Activated T-helper 2 cell treated with anti-CD3 and anti-CD28 coated beads, Interferon-gamma antibody, Interleukin-2, Interleukin-4, amounts not matched to agents 10 μg/mL and 5 μg/mL and 100 μg/mL, durations not matched to agents 14 hours and 24 hours and 36 hours (primary cell): ENCODE measurements at regions of chr9 and their contacts with region 1.

Region 1: GRCh38 chr9:132406554-132407122 is at the start of gene TTF1:
- DNase-seq: peak; percentile 91
- H3K4me3 Mint-ChIP-seq: peak within 1 kb of the TSS; percentile 80
- H3K27ac Mint-ChIP-seq: peak within 1 kb of the TSS; percentile 93
- H3K4me1 Mint-ChIP-seq: peaks cover 38% of the 10 kb centered on the region
- H3K27me3 Mint-ChIP-seq: peaks cover 20% of the 10 kb centered on the region
- total RNA-seq, gene TTF1: 35.4 and 36.2 TPM in 2 replicates

Region 2: GRCh38 chr9:130663258-130663976 is 1743.2 kb before region 1 on chr9:
- intact Hi-C with region 1: loop called (anchors 5 kb)
- DNase-seq: no peak
- H3K4me3 Mint-ChIP-seq: no peak overlapping the region
- H3K27ac Mint-ChIP-seq: no peak overlapping the region
- H3K4me1 Mint-ChIP-seq: peaks cover 3% of the 10 kb centered on the region
- H3K27me3 Mint-ChIP-seq: peaks cover 58% of the 10 kb centered on the region

Region 3: DNA sequence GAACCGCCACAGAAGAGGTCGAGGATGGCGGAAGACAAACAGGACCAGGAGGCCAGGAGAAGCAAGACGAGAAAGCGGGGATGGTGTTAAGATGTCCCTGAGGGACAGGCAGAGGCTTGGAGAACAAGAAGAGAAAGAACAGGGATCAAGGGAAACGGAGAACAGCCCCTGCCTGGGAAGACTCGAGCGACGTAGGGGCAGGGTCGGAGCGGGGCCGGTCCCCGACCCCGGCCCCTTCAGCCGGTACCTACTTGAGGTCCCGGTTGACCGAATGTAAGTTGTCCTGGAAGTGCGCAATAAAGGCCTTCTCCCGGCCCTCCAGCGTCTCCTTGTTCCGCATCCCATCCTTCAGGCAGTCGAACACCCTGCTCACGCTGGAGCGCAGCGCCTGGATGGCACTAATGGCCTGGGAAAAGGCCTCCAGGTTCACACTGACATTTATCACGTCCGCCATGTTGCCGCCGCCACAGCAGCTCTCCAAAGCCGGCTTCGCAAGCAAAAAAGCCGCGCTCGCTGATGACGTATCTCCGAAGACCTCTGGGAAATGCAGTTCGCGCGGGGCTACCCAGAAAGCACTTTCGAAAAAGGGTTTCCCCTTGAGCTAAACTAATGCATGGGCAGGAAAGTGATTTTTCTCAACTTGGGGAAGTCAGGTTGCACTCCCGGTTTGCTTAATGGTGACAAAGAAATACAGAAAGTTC is 327.1 kb before region 1 on chr9 and contains the start of gene MED27:
- intact Hi-C with region 1: no loop called
- DNase-seq: peak; percentile 88
- H3K4me3 Mint-ChIP-seq: peak within 1 kb of the TSS; percentile 97
- H3K27ac Mint-ChIP-seq: peak within 1 kb of the TSS; percentile 85
- H3K4me1 Mint-ChIP-seq: peaks cover 36% of the 10 kb centered on the region
- H3K27me3 Mint-ChIP-seq: no peaks in the 10 kb centered on the region
- total RNA-seq, gene MED27: 37.2 TPM in 2 replicates

Region 4: DNA sequence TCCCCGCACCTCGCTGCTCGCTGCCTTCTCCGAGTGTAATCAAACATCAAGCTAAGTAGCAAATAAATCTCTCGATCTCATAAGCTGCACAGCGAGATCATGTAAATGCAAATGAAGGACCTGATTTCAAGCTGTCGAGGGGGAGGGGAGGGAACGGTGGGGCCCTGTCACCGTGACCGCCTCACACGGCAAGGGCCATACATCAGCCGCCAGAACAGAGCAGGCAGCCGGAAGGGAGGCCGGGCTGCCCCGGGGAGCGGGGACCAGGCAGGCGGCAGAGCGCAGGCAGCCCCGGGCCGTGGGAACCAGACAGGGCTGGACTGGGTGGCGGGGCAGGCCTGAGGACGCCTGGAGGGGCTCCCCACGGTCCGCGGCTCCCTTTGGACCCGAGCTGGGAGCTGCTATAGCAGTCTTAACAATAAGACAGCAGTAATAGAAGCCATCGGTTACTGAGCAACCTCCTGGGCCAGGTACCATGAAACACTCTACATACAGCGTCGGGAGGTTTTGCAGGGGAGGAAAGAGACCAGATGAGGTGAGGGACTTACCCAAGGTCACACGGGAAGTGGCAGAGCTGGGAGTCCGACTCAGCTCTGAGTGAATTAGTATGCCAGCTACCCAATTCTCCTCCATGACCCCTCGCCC is 80.2 kb after region 1 on chr9:
- intact Hi-C with region 1: loop called (anchors 5 kb)
- DNase-seq: peak; percentile 29
- H3K4me3 Mint-ChIP-seq: peak overlapping the region; percentile 56
- H3K27ac Mint-ChIP-seq: no peak overlapping the region
- H3K4me1 Mint-ChIP-seq: peaks cover 15% of the 10 kb centered on the region
- H3K27me3 Mint-ChIP-seq: peaks cover 46% of the 10 kb centered on the region

Region 5: GRCh38 chr9:132575005-132575609 is 168.5 kb after region 1 on chr9:
- intact Hi-C with region 1: loop called (anchors 1 kb)
- DNase-seq: peak; percentile 22
- H3K4me3 Mint-ChIP-seq: no peak overlapping the region
- H3K27ac Mint-ChIP-seq: no peak overlapping the region
- H3K4me1 Mint-ChIP-seq: no peaks in the 10 kb centered on the region
- H3K27me3 Mint-ChIP-seq: peaks cover 46% of the 10 kb centered on the region

Region 6: DNA sequence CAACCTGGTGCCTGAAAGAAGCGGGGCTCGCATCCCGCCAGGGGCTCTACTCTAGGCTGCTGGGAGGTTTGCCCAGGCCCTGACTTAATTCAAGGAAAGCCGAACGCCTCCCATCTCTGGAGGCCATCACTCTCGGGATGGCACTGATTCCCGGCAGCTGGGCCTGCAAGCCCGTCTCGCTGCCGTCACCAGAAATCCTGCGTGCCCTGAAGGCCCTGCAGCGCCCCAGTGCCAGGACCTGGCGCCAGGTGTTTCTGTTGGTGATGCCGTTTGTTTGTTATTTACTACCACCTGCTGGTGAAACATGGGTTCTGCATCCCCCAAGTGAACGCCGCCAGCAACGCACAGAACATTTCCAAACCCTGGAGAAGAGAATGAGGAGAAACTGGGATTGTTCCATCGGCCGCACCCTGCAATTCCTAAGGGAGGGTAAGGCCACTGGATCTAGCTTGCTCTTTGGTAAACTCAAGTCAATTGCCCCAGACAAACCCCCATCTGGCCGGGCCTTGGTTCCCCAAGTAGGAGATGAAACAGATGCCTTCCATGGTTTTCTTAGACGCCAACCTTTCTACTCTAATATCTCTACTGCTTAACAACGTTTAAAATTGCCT is 393.5 kb after region 1 on chr9:
- intact Hi-C with region 1: loop called (anchors 5 kb)
- DNase-seq: peak; percentile 47
- H3K4me3 Mint-ChIP-seq: no peak overlapping the region
- H3K27ac Mint-ChIP-seq: no peak overlapping the region
- H3K4me1 Mint-ChIP-seq: peaks cover 2% of the 10 kb centered on the region
- H3K27me3 Mint-ChIP-seq: peaks cover 30% of the 10 kb centered on the region